A673 (cell line): ENCODE measurements at regions of chr5 and their contacts with region 1.

Region 1: GRCh38 chr5:55421074-55421529 is 113.3 kb downstream of the MTREX start:
- DNase-seq: no peak
- H3K4me3 ChIP-seq: no peak overlapping the region
- H3K27ac ChIP-seq: no peak overlapping the region
- H3K4me1 ChIP-seq: peaks cover 13% of the 10 kb centered on the region
- H3K27me3 ChIP-seq: no peaks in the 10 kb centered on the region
- CTCF ChIP-seq: no peak

Region 2: GRCh38 chr5:55445791-55446190 is 24.7 kb after region 1 on chr5:
- CTCF ChIA-PET with region 1: no interaction called
- POLR2A ChIA-PET with region 1: interaction called, 11 read pairs
- intact Hi-C with region 1: no loop called
- DNase-seq: no peak
- H3K4me3 ChIP-seq: no peak overlapping the region
- H3K27ac ChIP-seq: no peak overlapping the region
- H3K4me1 ChIP-seq: peaks cover 7% of the 10 kb centered on the region
- H3K27me3 ChIP-seq: no peaks in the 10 kb centered on the region
- CTCF ChIP-seq: no peak

Region 3: DNA sequence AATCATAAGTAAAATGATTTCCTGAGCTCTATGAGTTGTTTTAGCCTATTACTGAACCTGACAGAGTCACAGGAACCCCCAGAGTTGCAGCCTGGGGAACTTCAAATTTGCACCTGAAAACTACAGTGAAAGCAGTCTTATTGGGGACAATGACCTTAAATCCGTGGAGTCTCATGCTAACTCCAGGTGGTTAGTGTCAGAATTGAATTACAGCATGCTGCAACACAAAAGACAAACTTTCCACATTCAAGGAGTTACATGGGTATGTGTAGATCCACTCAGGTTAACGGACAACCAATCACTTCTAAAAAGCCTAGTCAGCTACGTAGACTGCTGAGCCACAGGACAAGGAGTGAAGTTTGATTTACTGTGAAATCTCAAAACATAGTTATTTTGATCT is 64.0 kb after region 1 on chr5:
- CTCF ChIA-PET with region 1: no interaction called
- POLR2A ChIA-PET with region 1: no interaction called
- intact Hi-C with region 1: no loop called
- DNase-seq: no peak
- H3K4me3 ChIP-seq: no peak overlapping the region
- H3K27ac ChIP-seq: no peak overlapping the region
- H3K4me1 ChIP-seq: no peaks in the 10 kb centered on the region
- H3K27me3 ChIP-seq: no peaks in the 10 kb centered on the region
- CTCF ChIP-seq: no peak